Ovary (tissue), 10 donors: ENCODE measurements at regions of chr12 and their contacts with region 1.

Region 1: GRCh38 chr12:93785262-93786010 is 108.3 kb downstream of the CRADD start:
- DNase-seq: peak in 4 of 5 donors; percentile 25 to 65 (median 52)
- H3K4me3 ChIP-seq: no peak overlapping the region
- H3K27ac ChIP-seq: no peak overlapping the region
- H3K4me1 ChIP-seq: peaks cover 14% of the 10 kb centered on the region
- H3K27me3 ChIP-seq: no peaks in the 10 kb centered on the region
- CTCF ChIP-seq: no peak
- EP300 ChIP-seq: no peak
- POLR2A ChIP-seq: no peak

Region 2: DNA sequence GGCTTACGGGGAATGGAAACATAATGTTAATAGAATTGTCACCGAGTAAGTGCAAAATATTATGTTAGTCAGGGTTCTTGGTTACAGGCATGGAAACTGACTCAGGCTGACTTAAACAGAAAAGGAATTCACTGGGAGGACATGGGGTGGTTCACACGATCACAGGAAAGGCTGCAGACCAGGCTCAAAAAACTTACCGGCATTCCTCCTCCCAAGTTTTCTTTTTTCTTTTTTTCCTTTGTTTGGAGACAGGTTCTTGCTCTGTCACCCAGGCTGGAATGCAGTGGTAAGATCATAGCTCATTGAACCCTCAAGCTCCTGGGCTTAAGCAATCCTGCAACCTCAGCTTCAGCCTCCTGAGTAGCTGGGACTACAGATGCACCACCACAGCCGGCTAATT is 331.8 kb before region 1 on chr12:
- intact Hi-C with region 1: no loop called
- DNase-seq: no peak
- H3K4me3 ChIP-seq: no peak overlapping the region
- H3K27ac ChIP-seq: no peak overlapping the region
- H3K4me1 ChIP-seq: no peaks in the 10 kb centered on the region
- H3K27me3 ChIP-seq: no peaks in the 10 kb centered on the region
- CTCF ChIP-seq: no peak
- EP300 ChIP-seq: no peak
- POLR2A ChIP-seq: no peak

Region 3: GRCh38 chr12:95224202-95225170 is 1439.0 kb after region 1 on chr12:
- intact Hi-C with region 1: loop called in 1 of 4 experiments (anchors 5 kb)
- DNase-seq: no peak
- H3K4me3 ChIP-seq: no peak overlapping the region
- H3K27ac ChIP-seq: no peak overlapping the region
- H3K4me1 ChIP-seq: peaks cover 12% of the 10 kb centered on the region
- H3K27me3 ChIP-seq: no peaks in the 10 kb centered on the region
- CTCF ChIP-seq: no peak
- EP300 ChIP-seq: no peak
- POLR2A ChIP-seq: no peak